ENCODE measurements at regions of chr7 and their contacts with region 1.

Region 1: DNA sequence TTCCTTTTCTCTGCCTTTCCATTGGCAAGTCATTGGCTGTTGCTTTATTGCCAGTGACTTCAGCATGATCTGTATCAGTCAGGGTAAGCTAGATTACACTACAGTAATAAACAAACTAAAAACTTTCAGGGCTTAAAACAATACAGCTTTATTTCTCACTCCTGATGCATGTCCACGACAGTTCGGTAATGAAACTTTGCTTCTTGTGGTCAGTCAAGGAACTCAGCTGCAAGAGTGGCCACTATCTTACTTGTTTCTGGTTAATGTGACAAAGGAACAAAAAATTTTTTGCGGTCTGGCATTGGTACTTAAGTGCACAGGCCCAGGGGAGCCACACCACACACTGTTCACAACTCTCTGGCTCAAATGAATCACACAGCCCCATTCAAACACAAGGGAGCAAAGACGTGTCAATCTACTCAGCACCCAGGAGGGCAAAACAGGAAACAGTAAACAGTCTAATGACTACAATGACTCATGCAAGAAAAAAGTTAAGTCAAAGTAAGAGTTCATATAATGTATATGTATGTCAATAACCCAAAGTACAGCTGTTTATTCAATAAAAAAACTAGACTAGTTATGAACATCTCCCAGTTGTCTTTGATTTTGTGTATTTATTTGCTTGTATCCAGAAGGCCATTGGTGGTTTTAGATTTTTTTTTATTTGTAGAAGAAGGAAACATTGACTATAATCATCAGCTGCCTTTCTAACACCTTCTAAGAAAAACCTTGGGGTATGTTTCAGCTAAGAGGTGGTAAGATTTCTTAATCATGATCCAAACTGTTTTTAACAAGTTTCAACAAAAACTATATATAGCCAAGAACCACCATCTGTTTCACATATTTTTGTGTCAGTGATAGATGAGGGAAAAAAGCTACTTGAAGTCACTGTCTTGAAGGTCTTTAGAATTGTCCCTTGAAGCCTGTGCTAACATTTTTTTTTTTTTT is 134.4 kb upstream of the FAM3C start:
- DNase-seq: peak; percentile 97
- ATAC-seq: peak; percentile 97
- H3K4me3 ChIP-seq: peak overlapping the region; percentile 54; the same call in 1 of the 2 replicates
- H3K27ac ChIP-seq: peak overlapping the region; percentile 98
- H3K4me1 ChIP-seq: peaks cover 28% of the 10 kb centered on the region
- H3K27me3 ChIP-seq: no peaks in the 10 kb centered on the region
- CTCF ChIP-seq: no peak

Region 2: DNA sequence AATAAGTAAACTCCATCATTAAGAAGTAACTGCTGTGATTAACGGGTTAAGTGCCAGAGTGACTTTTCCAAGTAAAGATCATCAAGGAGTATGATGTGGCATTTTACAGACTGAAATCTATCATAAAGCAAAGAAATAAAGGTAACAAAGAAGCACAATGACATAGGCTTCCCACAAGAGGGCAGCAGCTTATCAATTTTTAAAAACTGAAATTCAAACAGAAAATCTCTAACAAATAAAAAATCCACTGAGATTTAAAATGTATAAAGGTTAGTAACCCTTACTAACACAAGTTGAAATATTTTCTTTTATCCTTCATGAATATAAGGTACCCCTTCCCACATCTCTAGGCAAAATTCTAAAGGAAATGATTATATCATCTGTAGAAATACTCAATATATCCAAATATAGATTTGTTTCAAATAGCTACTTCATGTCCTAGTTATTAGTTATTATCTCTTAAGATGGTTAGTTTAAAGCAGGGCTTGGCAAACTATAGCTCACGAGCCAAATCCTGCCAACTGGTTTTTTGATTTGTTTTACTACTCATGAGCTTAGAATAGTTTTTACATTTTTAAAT is 163.6 kb before region 1 on chr7:
- CTCF ChIA-PET with region 1: no interaction called
- POLR2A ChIA-PET with region 1: no interaction called
- intact Hi-C with region 1: loop called (anchors 1 kb)
- DNase-seq: peak; percentile 46
- ATAC-seq: peak; percentile 53
- H3K4me3 ChIP-seq: no peak overlapping the region
- H3K27ac ChIP-seq: no peak overlapping the region
- H3K4me1 ChIP-seq: peaks cover 9% of the 10 kb centered on the region
- H3K27me3 ChIP-seq: no peaks in the 10 kb centered on the region
- CTCF ChIP-seq: peak; percentile 86

Region 3: GRCh38 chr7:121480058-121480457 is 50.4 kb before region 1 on chr7:
- CTCF ChIA-PET with region 1: no interaction called
- POLR2A ChIA-PET with region 1: no interaction called
- intact Hi-C with region 1: loop called (anchors 1 kb)
- DNase-seq: peak; percentile 50
- ATAC-seq: peak; percentile 93
- H3K4me3 ChIP-seq: no peak overlapping the region
- H3K27ac ChIP-seq: peak overlapping the region; percentile 6; the same call in 1 of the 2 replicates
- H3K4me1 ChIP-seq: peaks cover 12% of the 10 kb centered on the region
- H3K27me3 ChIP-seq: no peaks in the 10 kb centered on the region
- CTCF ChIP-seq: no peak

Region 4: DNA sequence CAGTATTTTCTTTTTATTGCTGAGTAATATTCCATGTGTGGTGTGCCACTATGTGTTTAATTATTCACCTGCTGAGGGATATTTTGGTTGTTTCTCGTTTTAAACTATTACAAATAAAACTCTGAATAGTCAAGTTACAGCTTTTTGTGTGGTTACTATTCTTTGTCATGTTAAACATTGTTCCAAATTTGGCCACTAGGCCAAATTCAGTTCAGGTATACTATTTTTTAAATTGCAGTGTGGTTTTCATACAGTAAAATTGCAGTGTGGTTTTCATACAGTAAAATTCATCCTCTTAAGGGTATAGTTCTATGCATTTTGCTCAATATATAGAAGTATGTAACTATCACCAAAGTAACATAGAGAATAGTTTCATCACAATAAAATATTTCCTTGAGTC is 36.9 kb before region 1 on chr7:
- CTCF ChIA-PET with region 1: no interaction called
- POLR2A ChIA-PET with region 1: no interaction called
- intact Hi-C with region 1: loop called (anchors 1 kb)
- DNase-seq: no peak
- ATAC-seq: no peak
- H3K4me3 ChIP-seq: no peak overlapping the region
- H3K27ac ChIP-seq: no peak overlapping the region
- H3K4me1 ChIP-seq: peaks cover 18% of the 10 kb centered on the region
- H3K27me3 ChIP-seq: no peaks in the 10 kb centered on the region
- CTCF ChIP-seq: no peak; the same call in 1 of the 2 replicates

Region 5: GRCh38 chr7:121504478-121504877 is 26.0 kb before region 1 on chr7:
- CTCF ChIA-PET with region 1: no interaction called
- POLR2A ChIA-PET with region 1: no interaction called
- intact Hi-C with region 1: no loop called
- DNase-seq: peak; percentile 76
- ATAC-seq: peak; percentile 95
- H3K4me3 ChIP-seq: 0 out of 2 replicates have a peak overlapping the region, but pooled peaks have one; percentile 7
- H3K27ac ChIP-seq: peak overlapping the region; percentile 14
- H3K4me1 ChIP-seq: 0 out of 2 replicates have a peak, but pooled peaks cover 6% of the 10 kb centered on the region
- H3K27me3 ChIP-seq: no peaks in the 10 kb centered on the region
- CTCF ChIP-seq: no peak

Measured in PC-3 (cell line).